Stomach (tissue), 19 donors: ENCODE measurements at regions of chr12 and their contacts with region 1.

Region 1: DNA sequence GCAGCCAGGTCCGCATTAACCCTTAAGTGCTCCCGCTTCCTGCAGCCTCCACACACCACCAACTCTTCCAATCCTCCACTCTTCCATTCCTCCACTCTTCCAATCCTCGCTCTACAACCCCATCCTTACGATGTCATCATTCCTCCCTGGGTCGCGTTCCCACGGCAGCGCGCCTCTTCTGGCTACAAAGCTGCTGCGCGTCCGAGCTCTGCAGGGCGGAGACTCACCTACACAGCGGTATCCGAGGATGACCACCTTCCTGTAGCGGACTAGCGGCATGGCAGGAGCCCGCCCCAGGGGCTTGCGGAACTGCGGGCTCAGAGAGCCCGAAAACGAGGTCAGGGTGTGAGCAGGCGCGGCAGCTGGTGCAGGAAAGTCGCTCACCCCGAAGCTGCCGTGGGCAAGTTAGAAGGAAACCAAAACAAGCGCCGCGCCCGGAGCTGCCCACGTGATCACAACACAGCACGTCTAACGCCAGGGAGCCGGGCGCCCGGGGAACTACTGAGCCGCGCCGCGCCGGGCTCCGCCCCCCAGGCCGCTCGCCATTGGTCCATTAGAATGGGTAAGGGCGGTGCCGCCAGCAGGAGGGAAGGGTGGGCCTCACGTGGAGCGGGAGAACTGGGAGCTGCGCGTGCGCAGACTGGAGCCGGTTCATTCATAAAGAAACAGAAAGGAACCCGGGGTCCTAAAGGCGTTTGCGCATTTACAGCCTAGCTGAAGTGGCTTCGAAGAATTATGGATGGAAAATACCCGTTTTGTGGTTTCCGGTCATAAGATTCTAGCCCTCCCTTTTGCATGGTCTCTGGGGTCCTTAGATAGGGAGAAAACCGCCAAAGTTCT is at the start of gene RHEBL1:
- DNase-seq: peak; percentile 99
- H3K4me3 ChIP-seq: peak within 1 kb of the TSS; percentile 74 to 88 (median 80)
- H3K27ac ChIP-seq: peak within 1 kb of the TSS; percentile 73 to 87 (median 85)
- H3K4me1 ChIP-seq: peaks cover 10 to 21% (median 19%) of the 10 kb centered on the region in 4 donors
- H3K27me3 ChIP-seq: no peaks in the 10 kb centered on the region
- CTCF ChIP-seq: peak in 2 of 7 experiments; percentile 8 to 22
- EP300 ChIP-seq: no peak
- POLR2A ChIP-seq: no peak
- total RNA-seq, gene RHEBL1: not detected

Region 2: DNA sequence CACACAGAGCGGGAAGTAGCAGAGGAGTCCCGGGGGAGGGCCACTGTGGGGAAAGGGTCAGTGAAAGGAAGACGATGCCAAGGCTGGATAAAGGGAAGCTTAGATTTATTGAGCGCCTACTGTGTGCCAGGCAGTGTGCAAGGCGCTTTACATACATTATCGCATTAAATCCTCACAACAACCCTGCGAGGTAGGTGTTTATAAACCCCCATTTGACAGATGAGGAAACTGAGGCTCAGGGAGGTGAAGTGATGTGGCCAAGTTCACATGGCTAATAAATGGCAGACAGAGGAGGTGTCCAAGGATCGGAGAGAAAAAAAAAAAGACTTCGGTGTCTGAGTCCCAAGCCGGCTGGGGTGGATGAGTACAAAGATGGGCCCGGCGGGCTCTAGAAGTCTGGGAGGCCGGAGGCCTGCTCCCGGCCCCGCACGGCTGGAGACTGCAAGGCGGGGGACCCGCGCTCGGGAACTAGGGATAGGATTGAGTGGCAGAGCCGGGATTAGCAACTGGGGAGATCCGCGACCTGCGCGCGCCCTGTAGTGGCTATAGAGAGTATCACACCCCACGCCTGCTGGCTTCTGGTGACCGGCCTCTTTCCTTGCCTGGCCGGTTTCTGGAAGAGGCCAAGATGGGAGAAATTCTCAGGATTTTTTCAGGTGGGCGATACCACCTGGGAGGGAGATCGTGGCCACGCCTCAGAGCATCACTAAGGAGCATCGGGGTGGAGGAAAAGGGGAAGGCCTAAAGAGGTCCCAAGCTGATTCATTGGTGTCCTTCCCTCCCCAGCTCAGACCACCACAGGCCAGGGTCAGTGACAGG is 74.5 kb before region 1 on chr12:
- intact Hi-C with region 1: no loop called
- DNase-seq: peak; percentile 86 to 94
- H3K4me3 ChIP-seq: peak overlapping the region; percentile 13 to 37 (median 26)
- H3K27ac ChIP-seq: no peak overlapping the region
- H3K4me1 ChIP-seq: peaks cover 34 to 53% (median 49%) of the 10 kb centered on the region in 4 donors
- H3K27me3 ChIP-seq: peaks cover 12 to 97% (median 57%) of the 10 kb centered on the region in 3 donors
- CTCF ChIP-seq: peak in 5 of 7 experiments; percentile 60 to 92 (median 80)
- EP300 ChIP-seq: no peak
- POLR2A ChIP-seq: no peak

Region 3: GRCh38 chr12:49121047-49121696 is 51.4 kb after region 1 on chr12:
- intact Hi-C with region 1: loop called (anchors 10 kb)
- DNase-seq: peak; percentile 45 to 81
- H3K4me3 ChIP-seq: no peak overlapping the region
- H3K27ac ChIP-seq: no peak overlapping the region
- H3K4me1 ChIP-seq: no peaks in the 10 kb centered on the region
- H3K27me3 ChIP-seq: no peaks in the 10 kb centered on the region
- CTCF ChIP-seq: peak in 4 of 7 experiments; percentile 29 to 50 (median 40)
- EP300 ChIP-seq: no peak
- POLR2A ChIP-seq: no peak